ENCODE measurements at regions of chr11 and their contacts with region 1.

Region 1: DNA sequence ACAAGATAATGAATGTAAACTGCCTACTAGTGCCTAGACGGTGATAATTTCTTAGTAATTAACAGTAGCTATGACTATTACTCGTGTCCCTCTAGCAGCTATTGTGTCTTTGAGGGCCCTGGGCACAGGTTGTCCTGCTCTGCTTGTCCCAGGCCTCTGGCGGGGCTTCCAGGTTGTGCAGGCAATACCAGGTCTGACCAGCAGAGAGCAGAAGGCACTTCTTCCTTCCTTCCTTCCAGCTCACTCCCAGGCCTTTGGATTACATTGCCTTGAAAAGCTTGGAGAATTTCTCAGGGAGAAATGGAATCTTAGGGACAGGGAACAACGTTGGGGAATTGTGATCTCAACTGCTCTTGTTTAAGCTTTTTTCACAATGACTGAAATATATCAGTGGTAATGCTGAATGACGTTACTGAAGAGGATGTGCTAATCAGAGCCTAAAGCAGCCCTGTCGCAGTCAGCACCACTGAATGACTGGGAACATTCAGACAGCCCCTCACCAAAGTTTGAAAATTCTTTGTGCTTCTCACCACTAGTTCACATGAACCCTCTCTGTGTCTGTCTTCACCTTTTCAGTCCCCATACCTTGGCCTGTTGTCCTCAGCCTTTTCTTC is 8.4 kb upstream of the CCKBR start:
- DNase-seq: no peak
- H3K4me3 ChIP-seq: no peak overlapping the region
- CTCF ChIP-seq: peak; percentile 94

Region 2: GRCh38 chr11:6124245-6124644 is 127.0 kb before region 1 on chr11:
- CTCF ChIA-PET with region 1: no interaction called
- POLR2A ChIA-PET with region 1: no interaction called
- DNase-seq: no peak
- H3K4me3 ChIP-seq: no peak overlapping the region
- CTCF ChIP-seq: no peak

Region 3: DNA sequence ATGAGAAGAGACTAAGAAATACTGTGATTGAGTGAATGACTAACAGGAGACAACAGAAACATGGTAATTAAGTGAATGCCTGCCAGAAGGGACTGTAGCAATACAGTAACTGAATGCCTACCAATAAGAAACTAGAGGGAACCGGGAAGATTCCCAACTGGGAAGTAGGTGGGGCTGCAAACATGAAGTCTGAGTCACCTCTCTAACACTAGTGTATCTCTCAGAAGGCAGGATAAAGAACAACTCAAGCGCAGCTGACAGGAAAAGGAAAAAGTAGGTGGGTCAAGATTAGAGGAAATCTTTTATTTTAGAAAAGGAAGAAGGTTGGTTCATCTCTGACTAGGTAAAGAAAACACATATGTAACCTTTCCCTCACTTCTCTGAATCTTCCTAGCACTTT is 31.9 kb before region 1 on chr11:
- CTCF ChIA-PET with region 1: interaction called, 14 read pairs
- POLR2A ChIA-PET with region 1: no interaction called
- DNase-seq: peak; percentile 77
- H3K4me3 ChIP-seq: no peak overlapping the region
- CTCF ChIP-seq: no peak

Region 4: DNA sequence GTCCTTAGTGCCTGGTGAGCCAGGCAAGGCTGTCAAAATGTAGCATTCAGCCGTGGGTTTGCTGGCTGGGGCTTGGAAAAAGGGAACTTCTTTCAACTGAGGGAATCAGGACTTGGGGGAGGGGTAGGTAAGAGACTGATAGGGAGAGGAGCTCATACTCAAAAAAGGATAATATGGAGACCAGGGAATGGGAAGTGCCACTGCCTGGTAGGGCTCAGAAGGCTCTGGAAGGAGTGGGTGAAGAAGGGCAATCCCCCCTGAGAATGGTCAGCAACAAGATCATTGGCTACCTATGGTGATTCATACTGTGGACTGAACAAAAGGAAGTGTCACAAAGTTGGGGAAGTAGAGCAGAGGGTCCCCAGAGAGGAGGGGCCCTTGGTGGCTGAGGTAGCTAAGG is 10.4 kb before region 1 on chr11:
- CTCF ChIA-PET with region 1: interaction called, 50 read pairs
- POLR2A ChIA-PET with region 1: no interaction called
- DNase-seq: no peak
- H3K4me3 ChIP-seq: no peak overlapping the region
- CTCF ChIP-seq: no peak

Region 5: GRCh38 chr11:6285019-6285418 is 33.8 kb after region 1 on chr11:
- CTCF ChIA-PET with region 1: interaction called, 25 read pairs
- POLR2A ChIA-PET with region 1: no interaction called
- DNase-seq: no peak
- H3K4me3 ChIP-seq: no peak overlapping the region
- CTCF ChIP-seq: no peak

Region 6: GRCh38 chr11:6315811-6316425 is 64.7 kb after region 1 on chr11:
- CTCF ChIA-PET with region 1: interaction called, 117 read pairs
- POLR2A ChIA-PET with region 1: interaction called, 6 read pairs
- DNase-seq: no peak
- H3K4me3 ChIP-seq: no peak overlapping the region
- CTCF ChIP-seq: peak; percentile 89

Region 7: GRCh38 chr11:6389921-6390724 is 138.9 kb after region 1 on chr11 and contains the start of gene SMPD1:
- CTCF ChIA-PET with region 1: no interaction called
- POLR2A ChIA-PET with region 1: no interaction called
- DNase-seq: peak; percentile 14
- H3K4me3 ChIP-seq: peak within 1 kb of the TSS; percentile 81
- CTCF ChIP-seq: no peak

Region 8: DNA sequence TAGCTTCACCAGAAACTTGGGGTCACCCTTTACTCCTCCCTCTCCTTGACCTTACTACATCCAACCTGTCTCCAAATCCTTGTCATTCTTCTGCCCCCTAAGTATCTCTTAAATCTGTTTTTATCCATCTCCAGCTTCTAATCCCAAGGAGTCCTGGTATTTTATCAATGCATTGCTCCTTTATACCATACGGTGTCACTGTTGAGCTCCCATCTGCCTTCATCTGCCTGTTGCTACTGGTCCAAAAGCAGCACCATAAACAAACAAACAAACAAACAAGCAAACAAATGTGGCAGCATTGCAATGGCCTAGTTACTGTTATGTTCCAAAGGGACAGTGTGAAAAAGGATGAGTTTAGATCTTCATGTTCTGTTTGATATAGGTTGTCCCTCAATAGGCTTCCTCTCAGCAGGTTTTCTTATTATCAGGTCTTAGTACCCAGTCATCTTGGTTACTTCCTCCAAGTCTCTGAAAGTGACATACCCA is 280.1 kb after region 1 on chr11:
- CTCF ChIA-PET with region 1: no interaction called
- POLR2A ChIA-PET with region 1: no interaction called
- DNase-seq: no peak
- H3K4me3 ChIP-seq: no peak overlapping the region
- CTCF ChIP-seq: peak; percentile 52

Measured in AG04449 (cell line).